SK-N-SH (cell line): ENCODE measurements at regions of chr6 and their contacts with region 1.

Region 1: DNA sequence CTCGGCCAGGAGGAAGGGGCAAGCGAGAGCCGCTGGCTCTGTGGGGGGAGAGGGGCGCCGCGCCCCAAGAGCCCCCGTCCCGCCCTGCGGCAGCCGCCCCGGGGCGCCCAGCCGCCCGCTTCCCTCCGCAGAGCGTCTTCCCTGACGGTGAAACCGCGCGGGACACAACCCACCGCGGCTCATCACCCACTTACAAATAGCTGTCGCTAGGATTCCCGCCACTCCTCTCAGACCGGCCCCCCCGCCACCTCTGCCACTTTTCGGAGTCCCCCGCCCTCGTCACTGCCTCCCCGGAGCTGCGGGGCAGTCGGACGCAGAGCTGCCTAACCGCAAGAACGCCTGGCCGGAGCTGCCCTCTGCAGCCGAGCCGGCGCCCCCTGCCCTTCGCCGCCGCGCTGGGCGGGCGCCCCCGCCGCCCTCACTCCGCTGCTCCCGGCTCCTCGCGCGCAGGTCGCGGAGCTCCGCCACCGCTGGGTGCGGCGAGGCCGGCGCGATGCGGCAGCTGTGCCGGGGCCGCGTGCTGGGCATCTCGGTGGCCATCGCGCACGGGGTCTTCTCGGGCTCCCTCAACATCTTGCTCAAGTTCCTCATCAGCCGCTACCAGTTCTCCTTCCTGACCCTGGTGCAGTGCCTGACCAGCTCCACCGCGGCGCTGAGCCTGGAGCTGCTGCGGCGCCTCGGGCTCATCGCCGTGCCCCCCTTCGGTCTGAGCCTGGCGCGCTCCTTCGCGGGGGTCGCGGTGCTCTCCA is at the start of gene SLC35D3:
- DNase-seq: peak; percentile 86
- H3K4me3 ChIP-seq: peak within 1 kb of the TSS; percentile 58 to 59
- H3K27ac ChIP-seq: peak within 1 kb of the TSS in 1 of 2 experiments; percentile 92; a peak in 2 of 4 replicates
- H3K4me1 ChIP-seq: peaks cover 0 to 34% of the 10 kb centered on the region in 2 experiments; a peak in 1 of 4 replicates
- H3K27me3 ChIP-seq: peaks cover 12% of the 10 kb centered on the region; the same call in 1 of the 2 replicates
- CTCF ChIP-seq: no peak
- EP300 ChIP-seq: no peak
- RAD21 ChIP-seq: no peak
- polyA plus RNA-seq, gene SLC35D3: 0.05 and 0.16 TPM in 2 replicates

Region 2: DNA sequence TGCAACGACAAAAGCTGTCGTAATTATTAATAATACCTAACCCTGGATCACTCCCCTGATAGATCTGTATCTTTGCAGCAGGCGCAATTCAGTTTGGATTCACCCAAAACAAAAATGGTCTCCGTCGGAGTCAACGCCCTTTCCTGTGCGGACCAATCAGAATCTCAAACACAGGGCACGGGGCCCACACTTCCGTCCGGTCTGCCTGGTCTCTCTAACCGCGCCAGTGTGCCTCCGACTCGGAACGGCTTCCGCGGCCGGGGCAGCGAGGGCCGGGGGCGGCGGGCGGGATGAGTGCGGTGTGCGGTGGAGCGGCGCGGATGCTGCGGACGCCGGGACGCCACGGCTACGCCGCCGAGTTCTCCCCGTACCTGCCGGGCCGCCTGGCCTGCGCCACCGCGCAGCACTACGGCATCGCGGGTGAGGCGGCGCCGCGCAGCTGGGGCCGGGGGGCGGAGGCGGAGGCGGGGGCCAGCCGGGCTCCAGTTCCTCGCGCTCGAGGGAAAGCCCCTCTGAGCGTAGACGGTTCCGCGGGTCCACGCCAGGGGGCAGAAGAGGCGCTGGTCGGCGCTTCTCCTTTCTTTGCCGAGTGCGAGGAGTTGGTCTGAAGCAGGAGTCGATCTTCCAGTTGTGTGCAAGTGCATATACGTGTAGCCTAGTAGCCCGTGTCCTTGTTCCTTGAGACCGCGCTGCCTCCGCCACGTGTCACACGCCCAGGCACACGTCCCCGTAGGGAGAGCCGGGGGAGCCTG is 99.6 kb before region 1 on chr6 and contains the start of gene PEX7:
- CTCF ChIA-PET with region 1: interaction called, 5 read pairs
- POLR2A ChIA-PET with region 1: interaction called, 15 read pairs
- DNase-seq: peak; percentile 93
- H3K4me3 ChIP-seq: peak within 1 kb of the TSS; percentile 61 to 66
- H3K27ac ChIP-seq: peak within 1 kb of the TSS; percentile 69 to 92
- H3K4me1 ChIP-seq: peaks cover 0 to 5% of the 10 kb centered on the region in 2 experiments; a peak in 1 of 4 replicates
- H3K27me3 ChIP-seq: no peaks in the 10 kb centered on the region
- CTCF ChIP-seq: peak; percentile 63
- EP300 ChIP-seq: no peak
- RAD21 ChIP-seq: peak; percentile 57
- polyA plus RNA-seq, gene PEX7: 10.8 and 13.1 TPM in 2 replicates

Region 3: DNA sequence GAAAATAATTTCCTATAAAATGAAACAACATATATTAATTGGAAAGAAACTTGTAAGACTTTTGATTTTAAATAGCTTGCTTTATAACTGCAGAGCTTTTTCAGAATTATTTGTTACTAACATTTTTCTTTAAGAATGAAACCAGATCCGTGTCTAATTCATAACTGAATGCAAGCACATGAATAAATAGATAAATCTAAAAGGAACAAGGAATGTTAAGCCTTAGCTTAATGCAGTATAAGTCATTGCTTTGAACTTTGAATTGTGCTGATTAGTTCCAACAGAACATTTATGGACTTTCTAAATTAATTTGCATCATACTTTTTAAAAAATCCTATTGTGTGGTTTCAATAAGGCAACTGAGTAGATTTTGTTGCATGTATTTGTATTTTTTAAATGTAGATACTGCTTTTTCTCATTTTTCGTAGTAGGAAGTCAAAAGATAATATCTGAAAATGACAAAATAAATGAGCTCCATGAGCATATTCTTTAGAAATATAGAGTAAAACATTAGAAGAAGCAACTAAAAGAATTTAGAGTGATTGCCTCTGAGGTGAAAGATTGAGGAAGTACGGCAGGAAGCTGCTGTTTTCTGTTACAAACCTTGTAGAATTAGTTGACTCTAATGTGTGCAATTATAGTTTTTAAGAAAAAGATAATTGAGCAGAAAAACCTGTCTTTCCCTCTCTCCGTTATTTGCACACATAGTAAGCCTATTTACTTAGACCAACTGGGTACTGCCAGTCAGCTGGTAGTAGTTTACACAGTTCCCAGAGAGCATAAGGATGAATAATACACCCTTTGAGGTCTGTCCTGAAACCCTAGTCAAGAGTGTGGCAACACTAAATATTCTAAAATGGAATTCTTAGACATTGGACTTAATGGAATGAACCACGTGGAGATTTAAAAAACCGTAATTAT is 32.6 kb before region 1 on chr6:
- CTCF ChIA-PET with region 1: interaction called, 3 read pairs
- POLR2A ChIA-PET with region 1: interaction called, 12 read pairs
- DNase-seq: no peak
- H3K4me3 ChIP-seq: no peak overlapping the region
- H3K27ac ChIP-seq: peak overlapping the region in 1 of 2 experiments; percentile 69; a peak in 2 of 4 replicates
- H3K4me1 ChIP-seq: peaks cover 6 to 14% of the 10 kb centered on the region in 2 experiments; a peak in 3 of 4 replicates
- H3K27me3 ChIP-seq: no peaks in the 10 kb centered on the region
- CTCF ChIP-seq: no peak
- EP300 ChIP-seq: no peak
- RAD21 ChIP-seq: no peak

Region 4: DNA sequence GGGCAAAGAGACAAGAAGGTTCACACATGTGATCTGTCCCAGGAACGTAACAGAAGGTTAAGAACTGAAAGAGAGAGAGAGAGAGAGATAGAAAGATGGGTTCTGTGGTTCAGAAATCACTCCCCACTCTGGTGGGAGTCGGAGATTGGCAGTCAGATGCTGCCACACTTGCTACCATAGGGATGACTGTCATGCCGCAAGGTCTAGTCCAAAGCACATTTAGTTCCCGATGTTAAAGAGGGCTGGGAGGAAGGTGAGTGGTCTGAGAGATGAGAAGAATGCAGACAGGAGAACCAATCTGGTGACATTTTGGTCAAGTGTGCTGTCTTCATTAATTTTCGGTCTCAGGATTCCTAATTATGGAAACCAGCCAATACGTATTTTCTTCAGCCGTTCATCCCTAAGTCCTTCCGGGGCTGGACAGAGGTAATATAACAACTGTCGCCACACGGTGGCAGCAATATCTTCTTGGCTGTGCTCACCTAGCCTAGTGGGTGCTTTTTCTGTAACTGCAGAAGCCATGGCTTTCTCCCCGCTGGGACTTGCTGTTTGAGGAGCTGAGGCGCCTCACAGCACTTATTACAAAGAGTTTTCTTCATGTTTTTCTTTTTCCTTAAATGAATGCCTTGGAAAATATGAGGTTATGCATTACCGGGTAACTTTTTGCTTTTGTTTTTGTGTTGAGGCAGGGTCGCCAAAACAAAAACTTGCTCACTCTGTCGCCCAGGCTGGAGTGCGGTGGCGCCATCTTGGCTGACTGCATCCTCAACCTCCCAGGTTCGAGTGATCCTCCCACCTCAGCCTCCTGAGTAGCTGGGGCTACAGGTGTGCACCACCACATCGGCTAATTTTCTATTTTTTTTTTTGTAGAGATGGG is 46.0 kb after region 1 on chr6:
- CTCF ChIA-PET with region 1: interaction called, 10 read pairs
- POLR2A ChIA-PET with region 1: interaction called, 92 read pairs
- DNase-seq: peak; percentile 42
- H3K4me3 ChIP-seq: 0 out of 4 replicates have a peak overlapping the region, but pooled peaks of 1 of the 2 experiments have one; percentile 26
- H3K27ac ChIP-seq: peak overlapping the region in 1 of 2 experiments; percentile 95; a peak in 2 of 4 replicates
- H3K4me1 ChIP-seq: peaks cover 0 to 43% of the 10 kb centered on the region in 2 experiments; a peak in 2 of 4 replicates
- H3K27me3 ChIP-seq: no peaks in the 10 kb centered on the region
- CTCF ChIP-seq: peak; percentile 55
- EP300 ChIP-seq: no peak
- RAD21 ChIP-seq: peak; percentile 74

Region 5: GRCh38 chr6:136989571-136990241 is 67.6 kb after region 1 on chr6:
- CTCF ChIA-PET with region 1: interaction called, 5 read pairs
- POLR2A ChIA-PET with region 1: interaction called, 48 read pairs
- DNase-seq: peak; percentile 87
- H3K4me3 ChIP-seq: peak overlapping the region; percentile 42 to 49
- H3K27ac ChIP-seq: peak overlapping the region in 1 of 2 experiments; percentile 100; a peak in 2 of 4 replicates
- H3K4me1 ChIP-seq: peaks cover 0 to 32% of the 10 kb centered on the region in 2 experiments; a peak in 2 of 4 replicates
- H3K27me3 ChIP-seq: peaks cover 9% of the 10 kb centered on the region; the same call in 1 of the 2 replicates
- CTCF ChIP-seq: no peak
- EP300 ChIP-seq: 0 out of 4 replicates have a peak, but pooled peaks of 1 of the 2 experiments have one; percentile 8
- RAD21 ChIP-seq: no peak

Region 6: GRCh38 chr6:137043710-137044365 is 121.7 kb after region 1 on chr6:
- CTCF ChIA-PET with region 1: interaction called, 3 read pairs
- POLR2A ChIA-PET with region 1: interaction called, 12 read pairs
- DNase-seq: no peak
- H3K4me3 ChIP-seq: peak overlapping the region; percentile 63 to 72
- H3K27ac ChIP-seq: peak overlapping the region in 1 of 2 experiments; percentile 84; a peak in 2 of 4 replicates
- H3K4me1 ChIP-seq: peaks cover 0 to 3% of the 10 kb centered on the region in 2 experiments; a peak in 2 of 4 replicates
- H3K27me3 ChIP-seq: peaks cover 15% of the 10 kb centered on the region; the same call in 1 of the 2 replicates
- CTCF ChIP-seq: no peak
- EP300 ChIP-seq: no peak
- RAD21 ChIP-seq: no peak

Region 7: GRCh38 chr6:137707590-137708360 is 785.7 kb after region 1 on chr6:
- CTCF ChIA-PET with region 1: no interaction called
- POLR2A ChIA-PET with region 1: no interaction called
- DNase-seq: peak; percentile 45
- H3K4me3 ChIP-seq: peak overlapping the region; percentile 19 to 52; a peak in 3 of 4 replicates
- H3K27ac ChIP-seq: no peak overlapping the region
- H3K4me1 ChIP-seq: peaks cover 0 to 3% of the 10 kb centered on the region in 2 experiments; a peak in 2 of 4 replicates
- H3K27me3 ChIP-seq: no peaks in the 10 kb centered on the region; the same call in 1 of the 2 replicates
- CTCF ChIP-seq: peak; percentile 76
- EP300 ChIP-seq: no peak
- RAD21 ChIP-seq: peak; percentile 74